ENCODE measurements at regions of chr2 and their contacts with region 1.

Region 1: GRCh38 chr2:127293748-127294562 is at the start of gene ERCC3:
- DNase-seq: peak; percentile 78
- ATAC-seq: peak; percentile 98
- H3K4me3 Mint-ChIP-seq: peak within 1 kb of the TSS; percentile 97
- H3K27ac Mint-ChIP-seq: peak within 1 kb of the TSS; percentile 95
- H3K4me1 Mint-ChIP-seq: peaks cover 25% of the 10 kb centered on the region
- H3K27me3 Mint-ChIP-seq: no peaks in the 10 kb centered on the region
- CTCF ChIP-seq: no peak
- total RNA-seq, gene ERCC3: 55.9 and 65.6 TPM in 2 replicates

Region 2: GRCh38 chr2:126886211-126886915 is 407.6 kb before region 1 on chr2:
- CTCF ChIA-PET with region 1: no interaction called
- POLR2A ChIA-PET with region 1: no interaction called
- intact Hi-C with region 1: no loop called
- DNase-seq: no peak
- ATAC-seq: no peak
- H3K4me3 Mint-ChIP-seq: no peak overlapping the region
- H3K27ac Mint-ChIP-seq: no peak overlapping the region
- H3K4me1 Mint-ChIP-seq: peaks cover 8% of the 10 kb centered on the region
- H3K27me3 Mint-ChIP-seq: peaks cover 18% of the 10 kb centered on the region
- CTCF ChIP-seq: no peak

Region 3: DNA sequence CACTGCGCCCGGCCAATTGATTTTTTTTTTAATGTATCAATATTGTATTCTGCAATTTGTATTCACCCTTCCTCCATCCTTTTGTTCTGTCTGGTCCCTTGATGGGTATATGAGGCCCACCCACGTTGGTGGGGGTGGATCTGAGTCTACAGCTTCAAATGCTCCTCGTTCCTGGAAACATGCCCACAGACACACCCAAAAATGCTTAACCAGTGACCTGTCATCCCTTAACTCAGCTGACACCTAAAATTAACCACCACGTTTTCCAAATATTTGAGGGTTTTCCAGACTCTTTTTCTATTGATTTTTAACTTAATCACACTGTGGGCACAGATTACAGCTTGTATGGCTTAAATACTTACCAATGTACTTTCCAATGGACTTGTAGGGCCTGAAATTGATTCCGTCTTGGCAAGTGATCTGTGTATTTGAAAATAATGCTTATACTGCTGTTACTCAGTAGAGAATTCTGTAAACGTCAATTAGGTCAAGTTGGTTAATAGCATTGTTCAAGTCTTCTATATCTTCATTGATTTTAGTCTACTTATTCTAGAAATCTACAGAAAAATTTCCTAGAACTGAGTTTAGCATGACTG is 39.5 kb before region 1 on chr2:
- CTCF ChIA-PET with region 1: no interaction called
- POLR2A ChIA-PET with region 1: no interaction called
- intact Hi-C with region 1: no loop called
- DNase-seq: no peak
- ATAC-seq: no peak
- H3K4me3 Mint-ChIP-seq: no peak overlapping the region
- H3K27ac Mint-ChIP-seq: no peak overlapping the region
- H3K4me1 Mint-ChIP-seq: no peaks in the 10 kb centered on the region
- H3K27me3 Mint-ChIP-seq: no peaks in the 10 kb centered on the region
- CTCF ChIP-seq: no peak

Region 4: DNA sequence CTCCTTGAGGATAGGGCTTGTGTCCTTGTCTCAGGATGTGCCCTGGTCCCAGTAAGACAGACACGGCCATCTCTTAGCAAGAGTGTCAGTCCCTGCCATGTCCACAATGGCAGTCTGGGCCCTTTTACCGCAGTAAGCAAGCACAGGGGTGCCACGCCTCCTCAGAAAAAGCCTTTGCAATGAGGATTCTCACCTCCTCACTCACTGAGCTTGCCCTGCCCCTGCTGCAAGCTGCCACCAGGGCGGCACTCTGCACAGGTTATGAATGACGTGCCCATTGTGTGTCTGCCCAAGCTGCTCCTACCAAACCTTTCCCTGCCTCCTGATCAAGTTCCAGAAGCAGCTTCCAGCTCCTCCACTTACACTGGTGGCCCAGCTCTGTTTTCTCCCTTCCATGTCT is 23.3 kb before region 1 on chr2:
- CTCF ChIA-PET with region 1: no interaction called
- POLR2A ChIA-PET with region 1: no interaction called
- intact Hi-C with region 1: no loop called
- DNase-seq: no peak
- ATAC-seq: no peak
- H3K4me3 Mint-ChIP-seq: no peak overlapping the region
- H3K27ac Mint-ChIP-seq: no peak overlapping the region
- H3K4me1 Mint-ChIP-seq: no peaks in the 10 kb centered on the region
- H3K27me3 Mint-ChIP-seq: no peaks in the 10 kb centered on the region
- CTCF ChIP-seq: no peak

Region 5: GRCh38 chr2:127313406-127313805 is 19.5 kb after region 1 on chr2:
- CTCF ChIA-PET with region 1: no interaction called
- POLR2A ChIA-PET with region 1: interaction called, 22 read pairs
- intact Hi-C with region 1: no loop called
- DNase-seq: no peak
- ATAC-seq: peak; percentile 95
- H3K4me3 Mint-ChIP-seq: no peak overlapping the region
- H3K27ac Mint-ChIP-seq: no peak overlapping the region
- H3K4me1 Mint-ChIP-seq: peaks cover 18% of the 10 kb centered on the region
- H3K27me3 Mint-ChIP-seq: no peaks in the 10 kb centered on the region
- CTCF ChIP-seq: no peak

Region 6: DNA sequence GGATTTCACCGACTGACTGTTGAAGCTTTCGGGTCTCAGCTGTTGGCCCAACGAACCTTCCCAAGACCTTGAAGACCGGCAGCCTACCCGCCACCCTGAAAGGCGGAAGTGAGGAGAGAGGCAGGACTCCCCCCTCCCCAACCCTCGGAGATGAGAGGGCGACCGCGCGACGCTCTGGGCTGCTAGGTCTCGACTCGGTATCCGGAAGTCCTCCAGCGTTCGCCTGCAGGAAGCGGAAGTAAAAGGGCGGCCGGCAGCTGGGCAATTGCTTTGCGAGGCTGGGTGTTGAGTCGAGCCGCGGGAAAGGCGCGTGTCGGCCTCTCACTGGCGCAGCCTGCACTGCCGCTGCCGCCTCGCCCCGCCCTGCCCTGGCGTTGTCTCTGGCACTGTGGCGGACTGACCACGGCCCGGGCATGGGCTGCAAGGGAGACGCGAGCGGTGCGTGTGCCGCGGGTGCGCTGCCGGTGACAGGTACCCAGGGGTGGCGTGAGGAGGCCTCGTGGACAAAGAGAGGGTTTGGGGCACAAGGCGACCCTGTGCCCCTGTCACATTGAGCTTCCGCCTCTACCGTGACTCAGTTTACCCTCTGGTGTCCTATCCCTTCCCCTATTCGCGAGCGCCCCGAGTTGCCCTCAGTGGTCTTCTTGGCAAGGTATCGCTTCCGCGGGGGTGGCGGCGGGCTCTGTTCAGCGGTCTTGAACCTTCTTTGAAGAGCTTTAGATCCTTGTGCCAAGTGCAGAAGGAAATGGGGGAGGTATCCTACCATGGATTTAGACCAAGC is 797.2 kb after region 1 on chr2 and contains the start of gene UGGT1:
- CTCF ChIA-PET with region 1: no interaction called
- POLR2A ChIA-PET with region 1: interaction called, 7 read pairs
- intact Hi-C with region 1: loop called (anchors 1 kb)
- DNase-seq: peak; percentile 83
- ATAC-seq: peak; percentile 96
- H3K4me3 Mint-ChIP-seq: peak within 1 kb of the TSS; percentile 88
- H3K27ac Mint-ChIP-seq: peak within 1 kb of the TSS; percentile 93
- H3K4me1 Mint-ChIP-seq: peaks cover 41% of the 10 kb centered on the region
- H3K27me3 Mint-ChIP-seq: no peaks in the 10 kb centered on the region
- CTCF ChIP-seq: no peak
- total RNA-seq, gene UGGT1: 43.7 and 46.8 TPM in 2 replicates